Natural killer cell (primary cell): ENCODE measurements at regions of chr11 and their contacts with region 1.

Region 1: GRCh38 chr11:118438314-118438931 is 2.1 kb downstream of the KMT2A start:
- DNase-seq: peak; percentile 49 to 85
- ATAC-seq: peak; percentile 45 to 52 (median 46)
- H3K4me3 ChIP-seq: peak overlapping the region; percentile 69
- H3K4me3 Mint-ChIP-seq: peak overlapping the region; percentile 94
- H3K27ac ChIP-seq: peak overlapping the region; percentile 78
- H3K27ac Mint-ChIP-seq: peak overlapping the region; percentile 94 to 98
- H3K4me1 ChIP-seq: peaks cover 30% of the 10 kb centered on the region
- H3K4me1 Mint-ChIP-seq: peaks cover 80 to 85% of the 10 kb centered on the region in 2 donors
- H3K27me3 ChIP-seq: no peaks in the 10 kb centered on the region
- H3K27me3 Mint-ChIP-seq: no peaks in the 10 kb centered on the region
- CTCF ChIP-seq: no peak

Region 2: GRCh38 chr11:118305726-118306125 is 132.7 kb before region 1 on chr11:
- intact Hi-C with region 1: loop called (anchors 1 kb)
- DNase-seq: peak in 1 of 2 donors; percentile 84
- ATAC-seq: peak; percentile 66 to 88 (median 68)
- H3K4me3 ChIP-seq: peak overlapping the region; percentile 40
- H3K4me3 Mint-ChIP-seq: peak overlapping the region; percentile 82
- H3K27ac ChIP-seq: peak overlapping the region; percentile 79
- H3K27ac Mint-ChIP-seq: peak overlapping the region; percentile 92 to 98
- H3K4me1 ChIP-seq: peaks cover 45% of the 10 kb centered on the region
- H3K4me1 Mint-ChIP-seq: peaks cover 49 to 76% of the 10 kb centered on the region in 2 donors
- H3K27me3 ChIP-seq: no peaks in the 10 kb centered on the region
- H3K27me3 Mint-ChIP-seq: no peaks in the 10 kb centered on the region
- CTCF ChIP-seq: no peak

Region 3: DNA sequence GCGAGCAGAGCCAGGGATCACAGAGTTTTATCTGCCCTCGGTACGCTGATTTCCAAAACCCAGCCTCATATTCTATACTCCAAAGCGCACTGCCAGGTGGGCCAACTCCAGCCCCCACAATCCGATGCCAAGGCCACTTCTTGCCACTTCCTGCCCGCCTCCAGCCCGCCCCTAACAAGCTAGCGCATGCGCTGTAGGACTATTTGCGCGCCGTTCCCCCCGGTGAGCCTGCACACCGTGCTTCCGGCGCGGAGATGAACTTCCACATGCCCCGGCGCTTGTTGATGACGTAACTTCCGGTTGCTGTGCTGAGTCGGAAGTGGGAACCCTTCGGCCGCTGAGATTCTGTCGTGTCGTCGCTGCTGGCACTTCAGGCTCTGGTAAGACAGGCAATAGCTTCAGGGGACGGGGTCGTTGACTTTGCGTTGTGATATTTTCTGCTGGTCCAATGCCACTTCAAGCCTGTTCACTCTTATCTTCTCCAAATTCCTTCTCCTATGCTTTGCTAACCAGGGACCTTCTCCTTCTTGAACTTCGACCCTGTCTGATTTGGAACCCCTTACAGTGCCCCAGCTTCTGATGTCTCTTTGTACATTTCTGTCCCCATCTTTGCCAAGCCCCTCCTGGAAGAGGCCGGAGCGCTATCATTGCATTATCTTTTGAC is 79.0 kb before region 1 on chr11 and contains the start of gene UBE4A:
- intact Hi-C with region 1: no loop called
- DNase-seq: peak; percentile 93 to 99
- ATAC-seq: peak; percentile 90 to 95 (median 90)
- H3K4me3 ChIP-seq: peak within 1 kb of the TSS; percentile 66
- H3K4me3 Mint-ChIP-seq: peak within 1 kb of the TSS; percentile 98
- H3K27ac ChIP-seq: peak within 1 kb of the TSS; percentile 75
- H3K27ac Mint-ChIP-seq: peak within 1 kb of the TSS; percentile 97 to 100
- H3K4me1 ChIP-seq: peaks cover 13% of the 10 kb centered on the region
- H3K4me1 Mint-ChIP-seq: peaks cover 35 to 42% of the 10 kb centered on the region in 2 donors
- H3K27me3 ChIP-seq: no peaks in the 10 kb centered on the region
- H3K27me3 Mint-ChIP-seq: no peaks in the 10 kb centered on the region
- CTCF ChIP-seq: no peak
- total RNA-seq, gene UBE4A: 35.1 to 43.9 (median 37.0) TPM

Region 4: GRCh38 chr11:118401151-118401878 is 37.1 kb before region 1 on chr11 and contains the start of gene ATP5MG:
- intact Hi-C with region 1: loop called (anchors 1 kb)
- DNase-seq: peak; percentile 83 to 98
- ATAC-seq: peak; percentile 81 to 84 (median 83)
- H3K4me3 ChIP-seq: peak within 1 kb of the TSS; percentile 77
- H3K4me3 Mint-ChIP-seq: peak within 1 kb of the TSS; percentile 100
- H3K27ac ChIP-seq: peak within 1 kb of the TSS; percentile 86
- H3K27ac Mint-ChIP-seq: peak within 1 kb of the TSS; percentile 99
- H3K4me1 ChIP-seq: peaks cover 15% of the 10 kb centered on the region
- H3K4me1 Mint-ChIP-seq: peaks cover 43 to 50% of the 10 kb centered on the region in 2 donors
- H3K27me3 ChIP-seq: no peaks in the 10 kb centered on the region
- H3K27me3 Mint-ChIP-seq: no peaks in the 10 kb centered on the region
- CTCF ChIP-seq: no peak
- total RNA-seq, gene ATP5MG: 90.3 to 135 (median 107) TPM